CD8-positive, alpha-beta T cell (primary cell): ENCODE measurements at regions of chr22 and their contacts with region 1.

Region 1: GRCh38 chr22:37260901-37261336 is 16.9 kb upstream of the RAC2 start:
- DNase-seq: peak in 7 of 9 experiments; percentile 44 to 82 (median 66)
- ATAC-seq: peak; percentile 90
- H3K4me3 ChIP-seq: no peak overlapping the region
- H3K4me3 Mint-ChIP-seq: peak overlapping the region; percentile 1
- H3K27ac ChIP-seq: no peak overlapping the region
- H3K27ac Mint-ChIP-seq: no peak overlapping the region
- H3K4me1 ChIP-seq: peaks cover 23% of the 10 kb centered on the region
- H3K4me1 Mint-ChIP-seq: peaks cover 21% of the 10 kb centered on the region
- H3K27me3 ChIP-seq: no peaks in the 10 kb centered on the region
- H3K27me3 Mint-ChIP-seq: no peaks in the 10 kb centered on the region
- CTCF ChIP-seq: peak; percentile 97

Region 2: DNA sequence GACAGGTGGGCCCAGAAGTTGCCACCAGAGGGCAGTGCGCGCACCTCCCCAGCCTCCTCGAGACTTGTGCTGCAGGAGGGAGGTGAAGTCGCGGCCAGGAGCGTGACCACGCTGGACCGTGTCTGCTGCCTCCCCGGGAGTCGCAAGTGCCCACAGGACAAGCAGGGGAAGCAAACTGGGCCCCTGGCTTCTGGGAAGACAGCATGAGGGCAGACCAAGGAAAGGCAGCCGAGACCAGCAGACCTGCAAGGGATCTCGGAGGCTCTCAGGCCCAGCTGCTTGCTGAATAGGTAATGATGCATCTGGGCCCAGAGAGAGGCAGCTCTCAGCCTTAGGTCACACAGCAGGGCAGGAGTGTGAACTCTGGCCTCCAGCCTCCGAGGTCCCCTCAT is 94.2 kb before region 1 on chr22:
- CTCF ChIA-PET with region 1: interaction called, 31 read pairs
- POLR2A ChIA-PET with region 1: no interaction called
- intact Hi-C with region 1: loop called (anchors 1 kb)
- DNase-seq: peak; percentile 73 to 92 (median 86)
- ATAC-seq: peak; percentile 43
- H3K4me3 ChIP-seq: peak overlapping the region; percentile 42 to 60
- H3K4me3 Mint-ChIP-seq: peak overlapping the region; percentile 91
- H3K27ac ChIP-seq: peak overlapping the region; percentile 49 to 75
- H3K27ac Mint-ChIP-seq: peak overlapping the region; percentile 94
- H3K4me1 ChIP-seq: peaks cover 88% of the 10 kb centered on the region
- H3K4me1 Mint-ChIP-seq: peaks cover 96% of the 10 kb centered on the region
- H3K27me3 ChIP-seq: no peaks in the 10 kb centered on the region
- H3K27me3 Mint-ChIP-seq: no peaks in the 10 kb centered on the region
- CTCF ChIP-seq: peak; percentile 91

Region 3: DNA sequence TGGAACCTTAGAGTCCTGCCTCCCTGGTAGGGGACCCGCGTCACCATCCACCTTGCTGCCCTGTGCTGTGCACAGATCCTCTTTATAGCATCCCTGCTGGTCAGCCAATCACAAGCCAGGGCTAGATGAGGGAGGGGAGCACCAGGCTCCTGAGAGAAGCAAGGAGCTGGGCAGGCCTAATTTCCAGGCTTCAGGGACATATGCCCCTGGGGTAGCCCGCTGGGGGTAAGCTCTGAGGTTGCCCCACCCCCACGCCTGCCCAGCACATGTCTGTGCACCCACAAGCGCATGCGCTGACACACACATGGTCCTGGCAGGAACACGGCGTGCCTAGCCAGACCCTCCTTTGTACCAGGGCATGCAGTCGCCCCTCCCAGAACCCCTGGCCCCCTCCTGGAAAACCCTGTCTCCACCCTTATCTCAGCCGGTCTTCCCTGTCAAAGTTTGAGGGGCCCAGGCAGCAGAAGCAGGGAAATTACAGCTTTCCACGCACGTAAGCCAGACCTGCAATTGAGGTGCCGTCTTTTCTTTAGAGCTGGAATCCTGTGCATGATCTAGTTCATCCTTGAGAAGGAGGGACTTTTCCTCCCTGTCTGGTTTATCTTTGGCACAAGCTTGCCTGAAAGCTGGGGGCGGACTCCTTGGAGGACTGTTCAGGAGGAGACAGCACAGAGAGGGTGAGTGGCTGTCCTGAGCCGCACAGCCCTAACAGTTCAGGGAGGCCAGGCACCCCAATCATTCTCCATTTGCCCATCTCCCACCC is 50.7 kb before region 1 on chr22:
- CTCF ChIA-PET with region 1: interaction called, 43 read pairs
- POLR2A ChIA-PET with region 1: no interaction called
- intact Hi-C with region 1: no loop called
- DNase-seq: peak in 3 of 9 experiments; percentile 3 to 48 (median 6)
- ATAC-seq: no peak
- H3K4me3 ChIP-seq: no peak overlapping the region
- H3K4me3 Mint-ChIP-seq: no peak overlapping the region
- H3K27ac ChIP-seq: no peak overlapping the region
- H3K27ac Mint-ChIP-seq: peak overlapping the region; percentile 83
- H3K4me1 ChIP-seq: peaks cover 62% of the 10 kb centered on the region
- H3K4me1 Mint-ChIP-seq: peaks cover 66% of the 10 kb centered on the region
- H3K27me3 ChIP-seq: no peaks in the 10 kb centered on the region
- H3K27me3 Mint-ChIP-seq: no peaks in the 10 kb centered on the region
- CTCF ChIP-seq: no peak

Region 4: DNA sequence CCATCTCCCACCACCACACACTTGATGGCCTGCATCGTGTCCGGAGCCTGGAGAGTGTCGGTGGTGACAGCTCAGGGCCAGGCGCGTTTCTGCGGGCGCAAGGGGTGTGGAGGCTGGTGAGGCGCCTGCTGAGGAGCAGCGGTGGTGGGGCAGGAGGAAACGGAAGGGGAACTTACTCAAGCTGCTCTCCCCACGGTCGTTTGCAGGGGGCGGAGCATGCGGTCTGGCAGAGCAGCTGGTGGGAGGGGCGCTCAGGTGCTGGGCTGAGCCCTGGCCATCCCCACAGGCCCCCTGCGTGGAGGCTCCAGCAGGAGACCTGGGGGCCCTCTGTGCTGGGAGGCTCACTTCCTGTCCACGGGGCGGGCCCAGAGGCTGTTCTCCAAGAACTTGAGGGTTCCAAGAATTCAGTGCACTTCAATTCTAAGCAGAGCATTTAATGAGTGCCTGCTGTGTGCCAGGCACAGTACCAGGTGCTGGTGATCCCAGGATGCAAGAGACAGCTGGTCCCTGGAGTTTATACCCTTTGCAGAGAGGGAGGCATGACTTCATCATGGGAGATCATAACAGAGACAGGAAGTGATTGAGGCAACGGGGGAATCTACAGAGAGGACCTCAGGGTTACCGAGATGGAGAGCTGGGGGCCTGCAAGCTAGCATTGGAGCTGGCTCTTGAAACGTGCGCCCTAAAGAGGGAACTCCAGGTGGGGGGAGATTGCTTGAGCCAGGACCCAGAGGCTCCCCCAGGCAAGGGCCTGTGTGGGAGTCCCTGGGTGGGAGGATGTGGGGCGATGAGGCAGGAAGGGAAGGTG is 16.6 kb before region 1 on chr22 and contains the start of gene RAC2:
- CTCF ChIA-PET with region 1: interaction called, 401 read pairs
- POLR2A ChIA-PET with region 1: interaction called, 41 read pairs
- intact Hi-C with region 1: no loop called
- DNase-seq: peak; percentile 71 to 95 (median 90)
- ATAC-seq: peak; percentile 54
- H3K4me3 ChIP-seq: peak within 1 kb of the TSS; percentile 79 to 98
- H3K4me3 Mint-ChIP-seq: peak within 1 kb of the TSS; percentile 98
- H3K27ac ChIP-seq: peak within 1 kb of the TSS; percentile 81
- H3K27ac Mint-ChIP-seq: peak within 1 kb of the TSS; percentile 100
- H3K4me1 ChIP-seq: peaks cover 45% of the 10 kb centered on the region
- H3K4me1 Mint-ChIP-seq: peaks cover 55% of the 10 kb centered on the region
- H3K27me3 ChIP-seq: no peaks in the 10 kb centered on the region
- H3K27me3 Mint-ChIP-seq: no peaks in the 10 kb centered on the region
- CTCF ChIP-seq: no peak
- total RNA-seq, gene RAC2: 152 to 159 TPM

Region 5: DNA sequence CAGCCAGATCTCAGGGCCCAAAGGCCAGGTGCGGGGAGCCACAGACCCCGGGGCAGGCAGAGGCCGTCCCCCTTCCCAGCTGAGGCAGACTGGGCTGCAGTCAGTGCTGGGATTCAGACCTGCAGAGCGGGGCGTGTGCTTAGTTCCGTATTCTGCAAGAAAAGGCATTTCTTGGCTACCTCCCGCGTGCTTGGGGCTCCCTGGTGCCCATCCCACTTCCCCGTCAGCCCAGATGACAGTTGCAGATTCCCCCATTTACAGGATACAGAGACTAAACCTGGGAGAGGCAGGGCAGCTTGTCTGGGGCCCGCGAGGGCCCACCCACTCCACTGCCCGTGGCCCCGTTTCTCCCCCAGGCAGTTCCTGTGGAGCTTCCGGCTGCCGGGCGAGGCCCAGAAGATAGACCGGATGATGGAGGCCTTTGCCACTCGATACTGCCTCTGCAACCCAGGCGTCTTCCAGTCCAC is 39.7 kb after region 1 on chr22:
- CTCF ChIA-PET with region 1: interaction called, 13 read pairs
- POLR2A ChIA-PET with region 1: no interaction called
- intact Hi-C with region 1: no loop called
- DNase-seq: peak in 8 of 9 experiments; percentile 30 to 78 (median 51)
- ATAC-seq: peak; percentile 68
- H3K4me3 ChIP-seq: peak overlapping the region in 1 of 2 experiments; percentile 13
- H3K4me3 Mint-ChIP-seq: peak overlapping the region; percentile 64
- H3K27ac ChIP-seq: peak overlapping the region; percentile 29 to 75
- H3K27ac Mint-ChIP-seq: peak overlapping the region; percentile 94
- H3K4me1 ChIP-seq: peaks cover 80% of the 10 kb centered on the region
- H3K4me1 Mint-ChIP-seq: peaks cover 80% of the 10 kb centered on the region
- H3K27me3 ChIP-seq: no peaks in the 10 kb centered on the region
- H3K27me3 Mint-ChIP-seq: no peaks in the 10 kb centered on the region
- CTCF ChIP-seq: no peak

Region 6: DNA sequence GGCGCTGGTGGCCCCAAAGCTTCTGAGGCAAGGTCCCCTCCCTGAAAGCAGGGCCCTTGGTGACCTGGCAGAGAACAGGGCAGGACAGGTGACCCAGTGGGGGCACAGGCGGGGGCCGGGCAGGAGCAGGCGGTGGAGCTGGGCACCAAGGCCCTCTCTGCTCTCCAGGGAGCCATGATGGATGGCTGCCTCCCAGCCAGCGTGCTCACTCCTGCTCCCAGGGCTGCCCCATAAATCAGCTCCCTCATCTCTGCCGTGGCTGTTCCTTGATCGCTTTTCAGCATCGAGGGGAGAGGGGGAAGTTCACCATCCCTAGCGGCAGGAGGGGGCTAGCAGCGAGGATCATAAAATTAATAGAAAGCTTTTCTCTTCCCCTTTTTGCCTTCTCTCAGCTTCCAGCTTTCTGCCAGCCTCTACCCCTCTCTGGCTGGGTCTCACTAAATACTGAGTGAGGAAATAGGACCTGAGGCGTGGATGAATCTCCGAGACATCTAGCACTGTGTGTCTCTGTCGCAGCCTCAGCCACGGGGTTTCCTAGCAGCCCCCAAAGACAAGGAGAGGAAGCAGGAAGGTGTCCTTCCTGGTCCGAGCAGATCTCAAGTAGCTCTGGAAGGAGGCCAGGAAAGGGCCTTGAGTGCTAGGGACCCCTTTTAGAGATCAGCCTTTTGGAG is 188.5 kb after region 1 on chr22:
- CTCF ChIA-PET with region 1: interaction called, 36 read pairs
- POLR2A ChIA-PET with region 1: no interaction called
- intact Hi-C with region 1: no loop called
- DNase-seq: no peak
- ATAC-seq: no peak
- H3K4me3 ChIP-seq: no peak overlapping the region
- H3K4me3 Mint-ChIP-seq: no peak overlapping the region
- H3K27ac ChIP-seq: no peak overlapping the region
- H3K27ac Mint-ChIP-seq: no peak overlapping the region
- H3K4me1 ChIP-seq: no peaks in the 10 kb centered on the region
- H3K4me1 Mint-ChIP-seq: no peaks in the 10 kb centered on the region
- H3K27me3 ChIP-seq: no peaks in the 10 kb centered on the region
- H3K27me3 Mint-ChIP-seq: no peaks in the 10 kb centered on the region
- CTCF ChIP-seq: no peak

Region 7: GRCh38 chr22:37578002-37578401 is 317.1 kb after region 1 on chr22:
- CTCF ChIA-PET with region 1: no interaction called
- POLR2A ChIA-PET with region 1: no interaction called
- intact Hi-C with region 1: no loop called
- DNase-seq: no peak
- ATAC-seq: no peak
- H3K4me3 ChIP-seq: no peak overlapping the region
- H3K4me3 Mint-ChIP-seq: no peak overlapping the region
- H3K27ac ChIP-seq: no peak overlapping the region
- H3K27ac Mint-ChIP-seq: no peak overlapping the region
- H3K4me1 ChIP-seq: peaks cover 19% of the 10 kb centered on the region
- H3K4me1 Mint-ChIP-seq: peaks cover 13% of the 10 kb centered on the region
- H3K27me3 ChIP-seq: no peaks in the 10 kb centered on the region
- H3K27me3 Mint-ChIP-seq: peaks cover 2% of the 10 kb centered on the region
- CTCF ChIP-seq: no peak